Lower lobe of right lung (tissue), 2 donors: ENCODE measurements at regions of chr2 and their contacts with region 1.

Region 1: GRCh38 chr2:100984892-100985379 is 17.2 kb upstream of the RPL31 start:
- DNase-seq: peak; percentile 88
- ATAC-seq: peak; percentile 73 to 81
- H3K4me3 ChIP-seq: no peak overlapping the region
- H3K27ac ChIP-seq: no peak overlapping the region
- H3K4me1 ChIP-seq: no peaks in the 10 kb centered on the region
- H3K27me3 ChIP-seq: no peaks in the 10 kb centered on the region
- CTCF ChIP-seq: peak; percentile 90

Region 2: GRCh38 chr2:100606726-100607343 is 378.1 kb before region 1 on chr2:
- intact Hi-C with region 1: loop called (anchors 5 kb)
- DNase-seq: no peak
- ATAC-seq: peak; percentile 53 to 60
- H3K4me3 ChIP-seq: no peak overlapping the region
- H3K27ac ChIP-seq: no peak overlapping the region
- H3K4me1 ChIP-seq: no peaks in the 10 kb centered on the region
- H3K27me3 ChIP-seq: no peaks in the 10 kb centered on the region
- CTCF ChIP-seq: peak; percentile 81

Region 3: DNA sequence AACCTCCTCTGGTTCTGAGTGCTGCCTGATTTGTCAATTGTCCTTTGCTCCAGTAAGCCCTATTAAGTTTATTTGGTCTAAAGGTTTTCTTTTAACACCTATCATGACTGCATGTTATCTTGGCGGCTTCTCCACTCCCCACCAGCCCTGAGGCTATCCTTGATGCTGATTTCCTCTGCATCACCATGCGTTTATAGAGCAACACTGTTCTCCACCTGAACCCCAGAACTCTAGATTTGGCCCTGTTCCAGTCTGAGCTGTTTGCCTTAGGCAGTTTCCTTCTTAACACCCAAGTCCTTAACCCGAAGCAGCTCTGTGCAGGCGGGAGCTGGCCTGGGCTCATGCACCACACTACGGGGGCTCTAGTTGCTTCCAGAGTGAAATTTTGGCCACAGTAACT is 263.2 kb before region 1 on chr2:
- intact Hi-C with region 1: loop called (anchors 10 kb)
- DNase-seq: no peak
- ATAC-seq: no peak
- H3K4me3 ChIP-seq: no peak overlapping the region
- H3K27ac ChIP-seq: no peak overlapping the region
- H3K4me1 ChIP-seq: no peaks in the 10 kb centered on the region
- H3K27me3 ChIP-seq: no peaks in the 10 kb centered on the region
- CTCF ChIP-seq: no peak